PC-9 (cell line): ENCODE measurements at regions of chrX and their contacts with region 1.

Region 1: DNA sequence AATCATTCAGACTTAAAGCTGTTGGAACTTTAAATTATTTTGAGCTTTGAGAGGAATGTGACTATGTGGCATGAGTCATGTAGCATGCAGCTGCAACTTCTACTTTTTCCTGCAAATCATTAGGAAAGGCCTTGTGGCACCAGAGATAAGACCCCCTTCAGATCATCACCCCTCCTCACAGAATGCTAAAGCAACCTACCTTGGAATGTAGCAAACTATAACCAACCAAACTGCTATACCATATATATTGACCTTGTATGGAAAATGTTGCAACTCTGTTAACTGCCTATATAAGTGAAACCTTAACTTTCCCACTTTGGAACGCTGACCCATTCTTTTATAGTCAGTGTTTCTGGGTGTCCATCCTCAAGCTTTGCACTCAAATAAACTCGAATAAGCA is 32.0 kb downstream of the ATXN3L start:
- DNase-seq: peak; percentile 11 to 37
- H3K4me3 ChIP-seq: no peak overlapping the region
- H3K27ac ChIP-seq: peak overlapping the region; percentile 57
- H3K4me1 ChIP-seq: peaks cover 21% of the 10 kb centered on the region
- H3K27me3 ChIP-seq: no peaks in the 10 kb centered on the region
- CTCF ChIP-seq: no peak

Region 2: GRCh38 chrX:12984629-12985319 is 303.0 kb before region 1 on chrX:
- CTCF ChIA-PET with region 1: no interaction called
- POLR2A ChIA-PET with region 1: no interaction called
- intact Hi-C with region 1: loop called (anchors 2 kb)
- DNase-seq: peak; percentile 85 to 88
- H3K4me3 ChIP-seq: peak overlapping the region; percentile 23; the same call in 1 of the 2 replicates
- H3K27ac ChIP-seq: peak overlapping the region; percentile 91
- H3K4me1 ChIP-seq: peaks cover 56% of the 10 kb centered on the region
- H3K27me3 ChIP-seq: no peaks in the 10 kb centered on the region
- CTCF ChIP-seq: no peak

Region 3: GRCh38 chrX:13101441-13102139 is 186.2 kb before region 1 on chrX:
- CTCF ChIA-PET with region 1: no interaction called
- POLR2A ChIA-PET with region 1: no interaction called
- intact Hi-C with region 1: loop called (anchors 5 kb)
- DNase-seq: peak; percentile 72 to 93
- H3K4me3 ChIP-seq: no peak overlapping the region; the same call in 1 of the 2 replicates
- H3K27ac ChIP-seq: peak overlapping the region; percentile 96
- H3K4me1 ChIP-seq: peaks cover 48% of the 10 kb centered on the region
- H3K27me3 ChIP-seq: no peaks in the 10 kb centered on the region
- CTCF ChIP-seq: no peak

Region 4: GRCh38 chrX:13194291-13195103 is 93.3 kb before region 1 on chrX:
- CTCF ChIA-PET with region 1: no interaction called
- POLR2A ChIA-PET with region 1: no interaction called
- intact Hi-C with region 1: loop called (anchors 2 kb)
- DNase-seq: peak in 1 of 2 experiments; percentile 90
- H3K4me3 ChIP-seq: peak overlapping the region; percentile 8; the same call in 1 of the 2 replicates
- H3K27ac ChIP-seq: peak overlapping the region; percentile 93
- H3K4me1 ChIP-seq: peaks cover 74% of the 10 kb centered on the region
- H3K27me3 ChIP-seq: no peaks in the 10 kb centered on the region
- CTCF ChIP-seq: no peak